ENCODE measurements at regions of chr12 and their contacts with region 1.

Region 1: DNA sequence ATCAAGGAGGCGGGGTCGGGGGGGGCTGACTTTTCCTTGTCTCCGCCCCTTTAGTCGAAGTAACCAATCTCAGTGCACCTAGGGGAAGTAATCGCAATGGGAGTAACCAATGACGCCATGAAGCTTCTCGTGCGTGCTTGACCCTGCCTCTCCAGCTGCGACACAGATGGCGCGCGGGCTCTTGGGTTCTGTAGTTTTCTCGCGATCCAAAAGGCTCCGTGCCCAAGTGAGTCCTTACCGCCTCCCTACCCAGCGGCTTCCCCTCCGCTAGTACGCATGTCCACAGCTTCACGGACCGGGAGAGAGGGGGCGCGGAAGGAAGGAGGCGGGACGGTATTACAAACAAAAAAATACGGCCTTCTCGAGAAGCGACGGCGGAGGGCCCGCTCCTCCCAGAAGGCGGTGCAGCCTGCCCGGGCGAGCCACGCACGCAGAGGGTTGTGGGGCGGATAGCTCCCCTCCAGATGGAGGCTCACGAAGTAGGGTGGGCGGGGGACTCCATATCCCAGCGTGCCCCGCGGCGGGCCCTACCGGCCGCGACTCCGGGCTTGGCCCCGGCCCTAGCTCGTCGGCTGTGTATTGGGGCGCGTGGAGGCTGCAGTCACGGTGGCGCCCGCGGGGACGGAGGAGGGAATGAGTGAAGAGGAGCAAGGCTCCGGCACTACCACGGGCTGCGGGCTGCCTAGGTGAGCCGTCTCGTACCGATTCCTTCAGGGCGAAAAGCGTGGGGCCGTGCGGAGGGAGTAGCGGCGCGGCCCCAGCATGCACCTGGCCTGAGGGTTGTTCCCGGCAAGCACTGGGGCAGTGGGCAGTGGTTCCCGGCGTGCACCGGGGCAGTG is at the start of gene TARBP2:
- DNase-seq: peak; percentile 99
- H3K4me3 ChIP-seq: peak within 1 kb of the TSS; percentile 50 to 65
- H3K27ac ChIP-seq: peak within 1 kb of the TSS; percentile 95 to 97
- H3K4me1 ChIP-seq: peaks cover 9% of the 10 kb centered on the region
- H3K27me3 ChIP-seq: no peaks in the 10 kb centered on the region
- CTCF ChIP-seq: peak in 2 of 4 experiments; percentile 26 to 41
- POLR2A ChIP-seq: no peak
- total RNA-seq, gene TARBP2: 23.4 to 45.7 TPM

Region 2: GRCh38 chr12:53054112-53054833 is 446.7 kb before region 1 on chr12:
- intact Hi-C with region 1: loop called (anchors 10 kb)
- DNase-seq: peak; percentile 98
- H3K4me3 ChIP-seq: peak overlapping the region; percentile 33 to 52
- H3K27ac ChIP-seq: peak overlapping the region; percentile 99
- H3K4me1 ChIP-seq: peaks cover 37% of the 10 kb centered on the region
- H3K27me3 ChIP-seq: no peaks in the 10 kb centered on the region
- CTCF ChIP-seq: peak in 2 of 4 experiments; percentile 9 to 55
- POLR2A ChIP-seq: peak; percentile 96

Region 3: GRCh38 chr12:53321074-53321814 is 179.8 kb before region 1 on chr12 and contains the start of gene AAAS:
- intact Hi-C with region 1: loop called (anchors 10 kb)
- DNase-seq: peak; percentile 94
- H3K4me3 ChIP-seq: peak within 1 kb of the TSS; percentile 69 to 77
- H3K27ac ChIP-seq: peak within 1 kb of the TSS; percentile 92 to 93
- H3K4me1 ChIP-seq: peaks cover 9% of the 10 kb centered on the region
- H3K27me3 ChIP-seq: no peaks in the 10 kb centered on the region
- CTCF ChIP-seq: peak; percentile 94 to 100 (median 98)
- POLR2A ChIP-seq: peak; percentile 39
- total RNA-seq, gene AAAS: 50.7 to 79.3 TPM

Region 4: DNA sequence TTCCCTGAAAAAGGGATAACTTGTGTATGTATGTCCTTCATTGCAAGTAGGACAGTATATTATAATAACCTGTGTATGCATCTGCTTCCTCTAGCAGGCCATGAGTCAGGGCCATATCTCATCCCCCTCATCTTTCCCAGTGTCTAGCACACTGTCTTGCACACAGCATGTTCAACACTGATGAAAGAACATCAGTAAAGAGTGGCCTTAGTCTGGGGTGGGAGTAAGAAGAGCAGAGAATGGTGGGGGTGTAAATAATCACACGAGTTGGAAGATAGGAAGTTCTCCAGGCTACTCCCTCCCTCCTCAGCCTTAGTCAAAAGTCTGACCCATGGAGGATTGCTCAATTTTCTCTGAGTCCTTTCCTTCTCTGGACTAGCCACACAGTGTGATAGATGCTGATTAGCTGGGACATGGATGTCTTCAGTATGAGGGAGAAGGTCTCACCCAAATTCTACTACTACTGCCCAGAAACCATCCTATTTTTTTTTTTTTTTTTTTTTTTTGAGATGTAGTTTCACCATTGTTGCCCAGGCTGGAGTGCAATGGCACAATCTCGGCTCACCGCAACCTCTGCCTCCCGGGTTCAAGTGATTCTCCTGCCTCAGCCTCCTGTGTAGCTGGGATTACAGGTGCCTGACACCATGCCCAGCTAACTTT is 135.6 kb before region 1 on chr12:
- intact Hi-C with region 1: no loop called
- DNase-seq: no peak
- H3K4me3 ChIP-seq: no peak overlapping the region
- H3K27ac ChIP-seq: no peak overlapping the region
- H3K4me1 ChIP-seq: no peaks in the 10 kb centered on the region
- H3K27me3 ChIP-seq: no peaks in the 10 kb centered on the region
- CTCF ChIP-seq: no peak
- POLR2A ChIP-seq: no peak

Region 5: DNA sequence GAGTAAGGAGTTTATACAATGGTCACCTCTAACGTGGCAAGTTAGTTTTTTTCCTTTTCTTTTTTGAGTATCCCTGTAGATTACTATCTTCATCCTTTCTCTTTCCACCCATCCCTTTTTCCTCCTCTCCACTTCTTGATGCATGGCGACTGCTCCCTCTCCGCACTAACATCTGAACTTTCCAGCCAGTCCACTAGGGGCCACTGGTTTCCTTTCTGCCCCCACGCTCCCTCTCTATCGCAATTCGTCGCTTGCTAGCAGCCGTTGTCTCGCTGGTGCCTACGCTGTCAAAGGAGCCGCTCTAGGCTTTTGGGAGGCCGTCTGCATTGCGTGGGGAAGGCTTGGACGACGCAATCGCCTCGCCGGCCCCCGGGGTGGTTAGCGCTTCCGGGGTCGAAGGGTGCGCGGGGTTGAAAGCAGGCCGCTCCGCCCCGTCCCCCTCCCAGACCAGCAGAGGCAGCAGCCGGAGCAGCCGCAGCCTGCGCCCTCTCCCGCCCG is 49.3 kb before region 1 on chr12 and contains the start of gene PCBP2:
- intact Hi-C with region 1: loop called (anchors 5 kb)
- DNase-seq: peak; percentile 98
- H3K4me3 ChIP-seq: peak within 1 kb of the TSS; percentile 72 to 85
- H3K27ac ChIP-seq: peak within 1 kb of the TSS; percentile 97
- H3K4me1 ChIP-seq: peaks cover 6% of the 10 kb centered on the region
- H3K27me3 ChIP-seq: no peaks in the 10 kb centered on the region
- CTCF ChIP-seq: peak; percentile 71 to 98 (median 92)
- POLR2A ChIP-seq: peak; percentile 63
- total RNA-seq, gene PCBP2: 322 to 534 TPM

Region 6: DNA sequence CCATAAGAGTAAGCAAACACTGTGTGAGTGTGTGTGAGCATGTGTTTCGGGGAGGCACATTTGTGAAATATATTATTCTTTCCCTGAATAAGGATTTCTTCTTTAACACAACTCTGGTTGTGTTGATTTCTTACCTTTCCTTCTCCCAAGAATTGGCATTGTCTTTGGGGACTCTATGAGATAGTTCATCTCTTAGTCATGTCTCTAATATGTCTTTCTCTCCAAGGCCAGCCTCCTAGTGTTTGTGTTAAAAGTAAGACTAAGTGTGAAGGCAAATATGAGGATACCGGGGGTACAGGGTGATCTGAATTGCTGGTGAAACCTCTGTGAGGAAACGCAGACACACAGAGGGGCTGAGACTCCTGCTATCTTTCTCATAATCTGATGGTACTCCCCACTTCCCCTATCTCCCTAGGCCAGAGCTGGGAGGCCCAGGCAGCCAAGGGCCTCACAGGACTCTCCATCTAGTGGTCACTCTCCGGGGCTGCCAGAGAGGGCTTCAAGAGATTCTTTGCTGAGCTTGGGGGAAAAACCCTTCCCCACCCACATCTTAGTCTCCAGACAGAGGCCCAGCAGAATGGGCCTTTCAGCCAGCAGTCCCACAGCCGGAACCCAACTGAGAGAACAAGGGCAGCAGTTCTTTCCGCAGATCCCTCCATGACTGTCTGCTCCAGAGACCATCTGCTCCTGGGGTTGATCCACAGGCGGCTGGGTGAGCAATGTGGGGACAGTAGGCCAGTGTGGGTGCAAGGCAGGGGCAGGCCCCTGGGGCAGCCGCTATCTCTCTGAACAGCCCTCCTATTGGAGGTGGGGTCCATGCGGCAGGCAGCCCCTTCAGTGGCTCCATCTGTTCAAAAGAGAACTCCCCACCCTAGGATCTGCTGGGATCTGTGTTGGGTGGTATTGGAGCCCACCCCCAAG is 447.9 kb after region 1 on chr12:
- intact Hi-C with region 1: no loop called
- DNase-seq: no peak
- H3K4me3 ChIP-seq: no peak overlapping the region
- H3K27ac ChIP-seq: no peak overlapping the region
- H3K4me1 ChIP-seq: no peaks in the 10 kb centered on the region
- H3K27me3 ChIP-seq: peaks cover 53% of the 10 kb centered on the region
- CTCF ChIP-seq: no peak
- POLR2A ChIP-seq: no peak

Measured in prostate gland (tissue), 2 donors.